ENCODE measurements at regions of chr11 and their contacts with region 1.

Region 1: GRCh38 chr11:61446211-61446651 is 16.3 kb downstream of the SDHAF2 start:
- DNase-seq: peak; percentile 83
- H3K4me3 ChIP-seq: no peak overlapping the region
- CTCF ChIP-seq: peak; percentile 95

Region 2: DNA sequence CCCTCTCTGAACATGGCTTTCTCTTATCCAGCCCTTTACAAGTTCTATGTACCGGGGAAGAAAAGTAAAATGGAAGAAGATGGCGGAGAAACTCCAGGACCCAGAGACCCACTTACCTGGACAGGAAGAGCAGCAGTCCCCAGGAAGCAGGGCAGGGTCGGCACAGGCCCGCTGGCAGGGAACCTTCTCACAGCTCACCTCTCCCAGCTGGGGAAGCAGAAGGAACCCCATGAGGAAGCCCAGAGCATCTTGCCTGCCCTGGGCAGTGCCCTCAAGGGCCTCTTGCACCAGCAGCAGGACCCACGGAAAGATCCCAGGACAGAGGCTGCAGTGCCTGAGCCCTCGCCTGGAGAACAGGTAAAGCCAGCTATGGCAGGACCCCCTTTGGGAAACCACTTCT is 181.9 kb before region 1 on chr11:
- CTCF ChIA-PET with region 1: no interaction called
- POLR2A ChIA-PET with region 1: no interaction called
- DNase-seq: no peak
- H3K4me3 ChIP-seq: no peak overlapping the region
- CTCF ChIP-seq: no peak

Region 3: DNA sequence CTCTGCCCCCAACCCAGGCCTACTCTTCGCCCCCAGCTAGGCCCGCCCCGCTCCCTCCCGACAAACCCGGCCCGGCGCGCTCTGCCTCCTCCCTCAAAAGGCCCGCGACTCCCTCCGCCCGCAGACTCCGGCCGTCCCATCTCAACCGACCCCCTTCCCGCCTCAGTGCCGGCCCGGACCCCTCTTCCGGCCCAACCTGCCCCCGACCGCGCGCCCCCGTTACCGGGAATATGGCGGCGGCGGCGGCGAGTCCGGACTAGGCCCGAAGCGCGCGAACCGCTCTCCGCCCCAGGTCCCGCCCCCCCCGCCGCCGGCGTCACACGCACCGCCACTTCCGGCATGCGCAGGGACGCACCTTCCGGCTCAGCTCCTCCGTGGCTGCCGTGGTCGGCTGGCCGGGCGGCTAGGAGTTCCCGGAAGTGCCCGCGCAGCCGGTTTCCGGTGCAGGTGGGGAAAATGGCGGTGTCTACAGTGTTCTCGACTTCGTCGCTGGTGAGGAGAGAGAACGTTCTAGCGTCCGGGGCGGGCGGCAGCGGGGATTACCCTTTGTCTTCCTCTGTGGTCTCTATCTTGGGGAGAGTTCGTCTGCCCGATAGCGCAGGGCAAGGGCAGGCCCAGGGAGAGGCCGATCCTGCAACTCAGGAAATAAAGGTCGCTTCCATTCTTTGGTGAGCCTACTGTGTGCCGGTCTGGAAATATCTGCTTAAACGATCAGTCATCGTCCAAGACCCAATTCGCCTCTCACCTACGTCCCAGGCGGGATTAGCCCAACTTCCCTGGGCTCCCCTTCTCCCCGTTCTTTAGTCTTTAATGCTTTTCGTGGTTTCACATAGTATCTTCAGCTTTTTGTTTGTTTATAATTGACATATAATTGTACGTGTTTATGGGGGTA is 16.3 kb before region 1 on chr11 and contains the starts of genes CPSF7 and SDHAF2:
- CTCF ChIA-PET with region 1: interaction called, 143 read pairs
- POLR2A ChIA-PET with region 1: interaction called, 4 read pairs
- DNase-seq: peak; percentile 63
- H3K4me3 ChIP-seq: peak within 1 kb of the TSS; percentile 99
- CTCF ChIP-seq: no peak

Region 4: DNA sequence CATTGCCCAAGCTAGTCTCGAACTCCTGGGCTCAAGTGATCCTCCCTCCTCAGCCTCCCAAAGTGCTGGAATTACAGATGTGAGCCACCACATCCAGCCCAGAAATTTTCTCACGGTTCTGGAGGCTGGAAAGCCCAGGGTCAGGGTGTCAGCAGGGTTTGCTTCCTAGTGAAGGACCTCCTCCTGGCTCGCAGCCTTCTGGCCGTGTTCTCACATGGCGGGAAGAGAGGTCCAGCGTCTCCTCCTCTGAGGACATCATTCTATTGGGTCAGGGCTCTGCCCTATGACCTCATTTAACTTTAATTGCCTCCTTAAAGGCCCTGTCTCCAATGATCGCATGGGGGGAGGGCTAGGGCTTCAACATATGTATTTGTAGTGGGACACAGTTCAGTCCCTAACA is 21.8 kb after region 1 on chr11:
- CTCF ChIA-PET with region 1: interaction called, 133 read pairs
- POLR2A ChIA-PET with region 1: interaction called, 3 read pairs
- DNase-seq: no peak
- H3K4me3 ChIP-seq: no peak overlapping the region
- CTCF ChIP-seq: no peak

Region 5: GRCh38 chr11:61509043-61510029 is 63.1 kb after region 1 on chr11:
- CTCF ChIA-PET with region 1: interaction called, 215 read pairs
- POLR2A ChIA-PET with region 1: no interaction called
- DNase-seq: no peak
- H3K4me3 ChIP-seq: peak overlapping the region; percentile 24
- CTCF ChIP-seq: peak; percentile 44

Region 6: GRCh38 chr11:61627567-61628445 is 181.6 kb after region 1 on chr11:
- CTCF ChIA-PET with region 1: interaction called, 283 read pairs
- POLR2A ChIA-PET with region 1: interaction called, 3 read pairs
- DNase-seq: no peak
- H3K4me3 ChIP-seq: no peak overlapping the region
- CTCF ChIP-seq: peak; percentile 84

Region 7: GRCh38 chr11:61733120-61733978 is 287.1 kb after region 1 on chr11:
- CTCF ChIA-PET with region 1: interaction called, 22 read pairs
- POLR2A ChIA-PET with region 1: no interaction called
- DNase-seq: no peak
- H3K4me3 ChIP-seq: no peak overlapping the region
- CTCF ChIP-seq: peak; percentile 99

Region 8: GRCh38 chr11:61757213-61757862 is 311.1 kb after region 1 on chr11:
- CTCF ChIA-PET with region 1: no interaction called
- POLR2A ChIA-PET with region 1: no interaction called
- DNase-seq: no peak
- H3K4me3 ChIP-seq: no peak overlapping the region
- CTCF ChIP-seq: no peak

Region 9: DNA sequence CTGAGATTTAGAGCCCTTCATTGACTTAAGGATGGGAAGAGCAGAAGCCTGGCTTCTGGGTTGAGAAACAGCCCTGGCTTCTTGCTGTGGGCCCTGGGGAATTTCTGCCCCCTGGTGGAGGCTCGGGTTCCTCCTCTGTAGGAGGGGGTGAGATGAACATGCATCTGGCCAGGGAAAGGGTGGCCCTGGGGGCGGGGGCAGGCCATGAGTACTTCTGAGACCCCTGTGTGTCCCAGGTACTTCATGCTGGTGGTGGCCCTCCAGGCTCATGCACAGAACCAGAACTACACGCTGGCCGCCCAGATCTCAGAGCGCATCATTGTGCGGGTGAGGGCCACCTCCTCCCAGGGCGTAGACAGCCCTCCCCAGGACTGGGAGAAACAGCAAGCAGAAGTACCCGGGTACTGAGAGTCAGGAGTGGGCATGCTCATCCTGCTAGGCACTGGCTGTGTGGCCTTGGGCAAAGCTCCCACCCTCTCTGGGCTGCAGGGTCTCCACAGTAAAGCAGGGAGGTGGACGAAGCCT is 330.4 kb after region 1 on chr11:
- CTCF ChIA-PET with region 1: no interaction called
- POLR2A ChIA-PET with region 1: no interaction called
- DNase-seq: no peak
- H3K4me3 ChIP-seq: no peak overlapping the region
- CTCF ChIP-seq: peak; percentile 80

Measured in AG04449 (cell line).